CD4-positive, alpha-beta memory T cell (primary cell): ENCODE measurements at regions of chr10 and their contacts with region 1.

Region 1: GRCh38 chr10:71727738-71728737 is 8.5 kb upstream of the C10orf105 start:
- DNase-seq: peak; percentile 84 to 91 (median 88)
- H3K4me3 ChIP-seq: peak overlapping the region in 1 of 2 donors; percentile 49
- H3K4me3 Mint-ChIP-seq: peak overlapping the region; percentile 75 to 87 (median 80)
- H3K27ac ChIP-seq: peak overlapping the region; percentile 73
- H3K27ac Mint-ChIP-seq: peak overlapping the region; percentile 96 to 99 (median 98)
- H3K4me1 ChIP-seq: peaks cover 97% of the 10 kb centered on the region
- H3K4me1 Mint-ChIP-seq: peaks cover 54 to 95% (median 76%) of the 10 kb centered on the region in 4 donors
- H3K27me3 ChIP-seq: no peaks in the 10 kb centered on the region
- H3K27me3 Mint-ChIP-seq: no peaks in the 10 kb centered on the region

Region 2: GRCh38 chr10:71454347-71454746 is 273.7 kb before region 1 on chr10:
- CTCF ChIA-PET with region 1: no interaction called
- POLR2A ChIA-PET with region 1: no interaction called
- intact Hi-C with region 1: no loop called
- DNase-seq: no peak
- H3K4me3 ChIP-seq: no peak overlapping the region
- H3K4me3 Mint-ChIP-seq: no peak overlapping the region
- H3K27ac ChIP-seq: no peak overlapping the region
- H3K27ac Mint-ChIP-seq: no peak overlapping the region
- H3K4me1 ChIP-seq: no peaks in the 10 kb centered on the region
- H3K4me1 Mint-ChIP-seq: no peaks in the 10 kb centered on the region
- H3K27me3 ChIP-seq: no peaks in the 10 kb centered on the region
- H3K27me3 Mint-ChIP-seq: peaks cover 3 to 10% of the 10 kb centered on the region in 2 donors

Region 3: DNA sequence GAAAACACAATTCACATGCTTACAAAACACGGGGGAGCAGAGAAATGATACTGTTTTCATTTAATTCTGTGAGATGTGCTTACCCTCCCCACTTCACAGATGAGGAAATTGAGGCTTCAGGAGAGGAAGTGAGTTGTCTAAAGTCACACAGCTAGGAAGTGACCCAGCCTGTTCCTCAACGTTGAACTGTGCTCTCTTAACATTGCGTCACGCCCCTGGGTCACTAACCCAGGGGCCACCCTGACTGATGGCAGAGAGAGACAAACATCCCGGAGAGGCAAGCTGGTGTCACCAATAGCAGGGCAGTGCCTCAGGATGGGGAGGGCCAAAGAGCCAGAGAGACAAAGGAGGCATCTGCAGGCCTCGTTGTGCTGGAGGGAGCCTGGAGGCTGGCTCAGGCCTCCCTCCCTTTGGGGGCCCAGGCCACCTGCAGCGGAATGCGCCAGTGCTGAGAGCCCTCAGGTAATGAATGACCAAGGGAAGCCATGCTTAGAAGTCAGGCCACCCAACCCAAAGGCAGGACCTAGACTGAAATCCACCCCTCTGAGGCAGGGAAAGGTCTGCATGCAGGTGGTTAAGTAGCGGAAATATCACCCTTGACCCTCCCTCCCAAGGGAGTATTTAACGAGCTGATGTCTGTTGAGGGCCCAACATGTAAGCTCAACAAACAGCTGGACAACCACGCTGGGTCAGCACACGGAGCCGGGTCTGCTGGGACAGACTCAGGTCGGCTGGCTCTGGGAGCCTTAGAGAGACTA is 89.8 kb before region 1 on chr10:
- CTCF ChIA-PET with region 1: no interaction called
- POLR2A ChIA-PET with region 1: no interaction called
- intact Hi-C with region 1: no loop called
- DNase-seq: no peak
- H3K4me3 ChIP-seq: no peak overlapping the region
- H3K4me3 Mint-ChIP-seq: no peak overlapping the region
- H3K27ac ChIP-seq: no peak overlapping the region
- H3K27ac Mint-ChIP-seq: peak overlapping the region in 3 of 7 donors; percentile 19 to 84 (median 50)
- H3K4me1 ChIP-seq: no peaks in the 10 kb centered on the region
- H3K4me1 Mint-ChIP-seq: peaks cover 0 to 7% (median 4%) of the 10 kb centered on the region in 4 donors
- H3K27me3 ChIP-seq: no peaks in the 10 kb centered on the region
- H3K27me3 Mint-ChIP-seq: peaks cover 0 to 4% of the 10 kb centered on the region in 2 donors

Region 4: GRCh38 chr10:71713135-71714030 is 14.7 kb before region 1 on chr10:
- CTCF ChIA-PET with region 1: interaction called, 177 read pairs
- POLR2A ChIA-PET with region 1: interaction called, 196 read pairs
- intact Hi-C with region 1: loop called (anchors 1 kb)
- DNase-seq: peak in 3 of 5 donors; percentile 35 to 51 (median 49)
- H3K4me3 ChIP-seq: peak overlapping the region; percentile 1 to 21
- H3K4me3 Mint-ChIP-seq: peak overlapping the region; percentile 76 to 93 (median 85)
- H3K27ac ChIP-seq: peak overlapping the region; percentile 69
- H3K27ac Mint-ChIP-seq: peak overlapping the region; percentile 96 to 99 (median 98)
- H3K4me1 ChIP-seq: peaks cover 62% of the 10 kb centered on the region
- H3K4me1 Mint-ChIP-seq: peaks cover 33 to 84% (median 62%) of the 10 kb centered on the region in 4 donors
- H3K27me3 ChIP-seq: no peaks in the 10 kb centered on the region
- H3K27me3 Mint-ChIP-seq: no peaks in the 10 kb centered on the region

Region 5: GRCh38 chr10:71740069-71740468 is 12.0 kb after region 1 on chr10:
- CTCF ChIA-PET with region 1: interaction called, 31 read pairs
- POLR2A ChIA-PET with region 1: interaction called, 1,191 read pairs
- intact Hi-C with region 1: loop called (anchors 1 kb)
- DNase-seq: no peak
- H3K4me3 ChIP-seq: no peak overlapping the region
- H3K4me3 Mint-ChIP-seq: peak overlapping the region in 7 of 8 donors; percentile 26 to 74 (median 59)
- H3K27ac ChIP-seq: peak overlapping the region; percentile 11
- H3K27ac Mint-ChIP-seq: peak overlapping the region; percentile 58 to 97 (median 89)
- H3K4me1 ChIP-seq: peaks cover 100% of the 10 kb centered on the region
- H3K4me1 Mint-ChIP-seq: peaks cover 76 to 100% (median 93%) of the 10 kb centered on the region in 4 donors
- H3K27me3 ChIP-seq: no peaks in the 10 kb centered on the region
- H3K27me3 Mint-ChIP-seq: no peaks in the 10 kb centered on the region

Region 6: GRCh38 chr10:71748671-71749191 is 20.7 kb after region 1 on chr10:
- CTCF ChIA-PET with region 1: interaction called, 31 read pairs
- POLR2A ChIA-PET with region 1: interaction called, 1,191 read pairs
- intact Hi-C with region 1: loop called (anchors 1 kb)
- DNase-seq: peak; percentile 86 to 90 (median 87)
- H3K4me3 ChIP-seq: peak overlapping the region in 1 of 2 donors; percentile 39
- H3K4me3 Mint-ChIP-seq: peak overlapping the region; percentile 76 to 89 (median 84)
- H3K27ac ChIP-seq: peak overlapping the region; percentile 58
- H3K27ac Mint-ChIP-seq: peak overlapping the region; percentile 92 to 99 (median 98)
- H3K4me1 ChIP-seq: peaks cover 100% of the 10 kb centered on the region
- H3K4me1 Mint-ChIP-seq: peaks cover 74 to 98% (median 92%) of the 10 kb centered on the region in 4 donors
- H3K27me3 ChIP-seq: no peaks in the 10 kb centered on the region
- H3K27me3 Mint-ChIP-seq: no peaks in the 10 kb centered on the region

Region 7: DNA sequence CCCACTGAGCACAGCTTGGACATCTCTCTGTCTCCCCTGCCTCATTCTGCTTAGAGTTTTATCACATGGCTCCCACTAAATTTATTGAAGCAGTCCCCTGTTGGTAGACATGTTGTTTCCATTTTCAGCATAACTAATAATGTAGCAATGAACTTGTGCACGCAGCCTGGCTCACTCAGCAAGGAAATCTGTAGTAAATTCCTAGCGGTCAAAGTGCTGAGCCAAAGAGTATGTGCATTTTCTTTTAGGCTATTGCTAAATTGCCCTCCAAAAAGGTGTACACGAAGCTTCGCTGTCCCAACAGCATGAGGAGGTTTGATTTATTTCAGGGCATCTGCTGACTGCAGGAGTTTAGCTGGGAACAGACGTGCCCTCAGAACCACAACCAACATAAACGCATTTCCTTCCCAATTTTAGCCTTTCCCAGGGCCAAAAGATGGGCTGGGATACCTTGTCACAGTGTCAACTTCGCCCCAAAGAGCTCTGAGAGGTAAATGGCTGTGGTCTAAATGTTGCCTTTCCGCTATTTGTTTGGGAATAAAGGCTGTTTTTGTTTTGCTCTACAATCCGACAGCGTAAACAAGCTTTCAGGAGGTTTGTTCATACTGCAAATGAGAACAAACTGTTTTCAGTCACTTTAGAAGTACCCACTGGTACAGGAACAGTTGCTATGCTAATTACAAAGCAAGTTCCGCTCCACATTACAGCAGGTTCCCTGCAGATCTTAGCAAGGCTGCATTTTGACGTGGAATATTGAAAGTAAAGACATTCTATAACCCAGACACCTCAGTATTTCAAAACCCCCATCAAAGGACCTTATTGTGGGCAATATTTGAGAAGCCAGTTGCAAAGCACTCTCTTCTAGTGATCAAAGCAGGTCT is 28.5 kb after region 1 on chr10:
- CTCF ChIA-PET with region 1: interaction called, 46 read pairs
- POLR2A ChIA-PET with region 1: interaction called, 1,191 read pairs
- intact Hi-C with region 1: no loop called
- DNase-seq: peak; percentile 5 to 76 (median 73)
- H3K4me3 ChIP-seq: peak overlapping the region in 1 of 2 donors; percentile 35
- H3K4me3 Mint-ChIP-seq: peak overlapping the region; percentile 54 to 87 (median 76)
- H3K27ac ChIP-seq: peak overlapping the region; percentile 53
- H3K27ac Mint-ChIP-seq: peak overlapping the region; percentile 95 to 99 (median 96)
- H3K4me1 ChIP-seq: peaks cover 94% of the 10 kb centered on the region
- H3K4me1 Mint-ChIP-seq: peaks cover 68 to 100% (median 83%) of the 10 kb centered on the region in 4 donors
- H3K27me3 ChIP-seq: no peaks in the 10 kb centered on the region
- H3K27me3 Mint-ChIP-seq: no peaks in the 10 kb centered on the region

Region 8: GRCh38 chr10:71766702-71767419 is 38.8 kb after region 1 on chr10:
- CTCF ChIA-PET with region 1: interaction called, 174 read pairs
- POLR2A ChIA-PET with region 1: interaction called, 444 read pairs
- intact Hi-C with region 1: loop called (anchors 1 kb)
- DNase-seq: peak in 1 of 5 donors; percentile 29
- H3K4me3 ChIP-seq: peak overlapping the region in 1 of 2 donors; percentile 25
- H3K4me3 Mint-ChIP-seq: peak overlapping the region; percentile 68 to 95 (median 78)
- H3K27ac ChIP-seq: peak overlapping the region; percentile 93
- H3K27ac Mint-ChIP-seq: peak overlapping the region; percentile 93 to 99 (median 95)
- H3K4me1 ChIP-seq: peaks cover 97% of the 10 kb centered on the region
- H3K4me1 Mint-ChIP-seq: peaks cover 67 to 99% (median 84%) of the 10 kb centered on the region in 4 donors
- H3K27me3 ChIP-seq: no peaks in the 10 kb centered on the region
- H3K27me3 Mint-ChIP-seq: no peaks in the 10 kb centered on the region